ENCODE measurements at regions of chr12 and their contacts with region 1.

Region 1: DNA sequence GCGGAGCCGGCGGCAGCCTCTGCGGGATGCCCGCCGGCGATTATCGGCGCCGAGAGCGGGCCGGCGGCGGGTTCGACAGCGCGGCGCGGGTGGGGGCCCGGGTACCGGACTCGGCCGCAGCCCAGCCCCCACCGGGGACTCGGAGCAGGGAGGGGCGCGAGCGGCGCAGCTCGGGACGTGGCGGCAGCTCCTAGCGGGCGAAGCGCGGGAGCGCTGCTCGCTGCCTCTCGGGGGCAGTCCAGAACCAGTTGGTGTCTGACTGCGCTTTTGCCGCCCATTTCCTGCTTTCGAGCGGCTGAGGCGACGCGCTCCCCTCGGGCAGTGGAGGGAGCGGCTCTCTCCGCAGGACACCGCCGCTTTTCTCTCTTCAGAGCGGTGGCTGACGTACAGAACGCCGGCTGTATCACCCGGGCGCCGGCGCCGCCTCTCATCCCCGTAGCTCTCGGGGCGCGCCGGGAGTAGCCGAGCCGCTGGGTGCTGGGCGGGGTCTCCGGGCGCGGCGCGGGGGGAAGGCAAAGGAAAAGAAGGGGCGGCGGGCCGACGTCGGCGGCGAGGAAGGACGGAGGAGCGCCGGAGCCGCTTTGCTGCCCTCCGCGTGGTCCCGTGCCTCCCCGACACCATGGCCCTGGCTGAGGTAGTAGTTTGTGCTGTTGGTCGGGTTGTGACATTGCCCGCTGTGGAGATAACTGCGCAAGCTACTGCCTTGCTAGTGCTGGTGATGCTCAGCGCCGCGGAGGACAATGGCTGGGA is 136.6 kb downstream of the MON2 start:
- DNase-seq: peak; percentile 45
- ATAC-seq: peak; percentile 80
- H3K4me3 ChIP-seq: peak overlapping the region; percentile 77
- H3K27ac ChIP-seq: peak overlapping the region; percentile 99
- H3K4me1 ChIP-seq: peaks cover 17% of the 10 kb centered on the region; the same call in 1 of the 2 replicates
- H3K27me3 ChIP-seq: no peaks in the 10 kb centered on the region
- CTCF ChIP-seq: peak; percentile 28 to 51 (median 40); a peak in 4 of 6 replicates
- EP300 ChIP-seq: peak in 1 of 2 experiments; percentile 17; a peak in 1 of 4 replicates
- POLR2A ChIP-seq: peak; percentile 88
- RAD21 ChIP-seq: peak; percentile 31; the same call in 1 of the 2 replicates

Region 2: GRCh38 chr12:62259993-62260732 is 343.1 kb before region 1 on chr12 and contains the start of gene USP15:
- CTCF ChIA-PET with region 1: no interaction called
- POLR2A ChIA-PET with region 1: interaction called, 3 read pairs
- RAD21 ChIA-PET with region 1: interaction called, 3 read pairs
- SMC1A ChIA-PET with region 1: no interaction called
- in situ Hi-C with region 1: no loop called
- intact Hi-C with region 1: loop called (anchors 2 kb)
- DNase-seq: peak; percentile 73
- ATAC-seq: peak; percentile 85
- H3K4me3 ChIP-seq: peak within 1 kb of the TSS; percentile 99
- H3K27ac ChIP-seq: peak within 1 kb of the TSS; percentile 90
- H3K4me1 ChIP-seq: peaks cover 8% of the 10 kb centered on the region
- H3K27me3 ChIP-seq: no peaks in the 10 kb centered on the region
- CTCF ChIP-seq: peak; percentile 54 to 70 (median 64)
- EP300 ChIP-seq: peak; percentile 15 to 67; a peak in 2 of 4 replicates
- POLR2A ChIP-seq: peak; percentile 96
- RAD21 ChIP-seq: peak; percentile 18; the same call in 1 of the 2 replicates
- polyA plus RNA-seq, gene USP15: 89.1 to 101 TPM

Region 3: GRCh38 chr12:62581288-62582064 is 21.8 kb before region 1 on chr12:
- CTCF ChIA-PET with region 1: interaction called, 15 read pairs
- POLR2A ChIA-PET with region 1: interaction called, 4 read pairs
- RAD21 ChIA-PET with region 1: interaction called, 15 read pairs
- SMC1A ChIA-PET with region 1: interaction called, 20 read pairs
- in situ Hi-C with region 1: no loop called
- intact Hi-C with region 1: no loop called
- DNase-seq: no peak
- ATAC-seq: peak; percentile 87
- H3K4me3 ChIP-seq: no peak overlapping the region
- H3K27ac ChIP-seq: no peak overlapping the region
- H3K4me1 ChIP-seq: no peaks in the 10 kb centered on the region
- H3K27me3 ChIP-seq: no peaks in the 10 kb centered on the region
- CTCF ChIP-seq: peak; percentile 49 to 66 (median 65); a peak in 4 of 6 replicates
- EP300 ChIP-seq: no peak
- POLR2A ChIP-seq: no peak
- RAD21 ChIP-seq: peak; percentile 81

Region 4: DNA sequence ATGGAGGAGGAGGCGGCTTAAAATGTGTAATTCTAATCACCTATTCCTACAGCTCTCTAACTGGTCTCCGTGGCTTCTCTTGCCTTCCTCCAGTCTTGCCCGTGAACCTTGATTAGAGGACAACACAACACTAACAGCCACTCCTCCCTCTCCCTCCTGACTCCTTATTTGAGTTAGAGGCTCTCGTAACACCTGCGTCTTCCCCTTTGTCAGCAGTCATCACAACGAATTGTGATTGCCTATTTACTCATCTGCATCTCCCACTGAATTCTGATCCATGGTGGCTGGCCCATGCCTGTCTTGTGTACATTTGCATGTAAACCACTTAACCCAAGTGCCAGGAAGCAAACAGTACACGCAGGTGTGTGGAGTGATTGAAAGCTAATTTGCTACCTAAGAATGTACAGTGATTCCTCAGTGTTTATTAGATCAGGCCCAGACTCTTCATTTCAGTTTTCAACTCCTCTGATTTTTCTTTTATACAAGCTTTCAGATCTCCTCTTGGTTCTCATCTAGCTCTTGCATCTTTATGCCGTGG is 17.9 kb after region 1 on chr12:
- CTCF ChIA-PET with region 1: interaction called, 14 read pairs
- POLR2A ChIA-PET with region 1: interaction called, 4 read pairs
- RAD21 ChIA-PET with region 1: interaction called, 3 read pairs
- SMC1A ChIA-PET with region 1: interaction called, 11 read pairs
- in situ Hi-C with region 1: no loop called
- intact Hi-C with region 1: no loop called
- DNase-seq: no peak
- ATAC-seq: no peak
- H3K4me3 ChIP-seq: no peak overlapping the region
- H3K27ac ChIP-seq: no peak overlapping the region
- H3K4me1 ChIP-seq: no peaks in the 10 kb centered on the region
- H3K27me3 ChIP-seq: no peaks in the 10 kb centered on the region
- CTCF ChIP-seq: no peak
- EP300 ChIP-seq: no peak
- POLR2A ChIP-seq: no peak
- RAD21 ChIP-seq: no peak

Region 5: GRCh38 chr12:62692884-62693283 is 89.6 kb after region 1 on chr12:
- CTCF ChIA-PET with region 1: interaction called, 3 read pairs
- POLR2A ChIA-PET with region 1: interaction called, 4 read pairs
- RAD21 ChIA-PET with region 1: interaction called, 10 read pairs
- SMC1A ChIA-PET with region 1: interaction called, 6 read pairs
- in situ Hi-C with region 1: no loop called
- intact Hi-C with region 1: no loop called
- DNase-seq: no peak
- ATAC-seq: no peak
- H3K4me3 ChIP-seq: no peak overlapping the region
- H3K27ac ChIP-seq: no peak overlapping the region
- H3K4me1 ChIP-seq: no peaks in the 10 kb centered on the region; the same call in 1 of the 2 replicates
- H3K27me3 ChIP-seq: no peaks in the 10 kb centered on the region; a peak in 1 of 4 replicates
- CTCF ChIP-seq: no peak
- EP300 ChIP-seq: no peak
- POLR2A ChIP-seq: no peak
- RAD21 ChIP-seq: no peak

Region 6: GRCh38 chr12:62793256-62794217 is 190.3 kb after region 1 on chr12:
- CTCF ChIA-PET with region 1: interaction called, 72 read pairs
- POLR2A ChIA-PET with region 1: interaction called, 8 read pairs
- RAD21 ChIA-PET with region 1: interaction called, 22 read pairs
- SMC1A ChIA-PET with region 1: interaction called, 19 read pairs
- in situ Hi-C with region 1: no loop called
- intact Hi-C with region 1: loop called (anchors 2 kb)
- DNase-seq: peak; percentile 27
- ATAC-seq: peak; percentile 84
- H3K4me3 ChIP-seq: no peak overlapping the region
- H3K27ac ChIP-seq: no peak overlapping the region
- H3K4me1 ChIP-seq: no peaks in the 10 kb centered on the region
- H3K27me3 ChIP-seq: no peaks in the 10 kb centered on the region
- CTCF ChIP-seq: peak; percentile 89 to 96 (median 96)
- EP300 ChIP-seq: no peak
- POLR2A ChIP-seq: no peak
- RAD21 ChIP-seq: peak; percentile 98

Region 7: GRCh38 chr12:63302269-63302940 is 699.2 kb after region 1 on chr12:
- CTCF ChIA-PET with region 1: no interaction called
- POLR2A ChIA-PET with region 1: no interaction called
- RAD21 ChIA-PET with region 1: no interaction called
- SMC1A ChIA-PET with region 1: no interaction called
- in situ Hi-C with region 1: no loop called
- intact Hi-C with region 1: loop called (anchors 10 kb)
- DNase-seq: peak; percentile 41
- ATAC-seq: peak; percentile 86
- H3K4me3 ChIP-seq: no peak overlapping the region
- H3K27ac ChIP-seq: no peak overlapping the region
- H3K4me1 ChIP-seq: no peaks in the 10 kb centered on the region
- H3K27me3 ChIP-seq: no peaks in the 10 kb centered on the region
- CTCF ChIP-seq: no peak
- EP300 ChIP-seq: peak; percentile 3 to 64; a peak in 2 of 4 replicates
- POLR2A ChIP-seq: no peak
- RAD21 ChIP-seq: no peak